Activated CD8-positive, alpha-beta T cell treated with anti-CD3 and anti-CD28 coated beads for 36 hours (primary cell): ENCODE measurements at regions of chr5 and their contacts with region 1.

Region 1: GRCh38 chr5:39376293-39376714 is 12.0 kb upstream of the C9 start:
- DNase-seq: peak; percentile 64
- ATAC-seq: peak; percentile 72
- H3K4me3 Mint-ChIP-seq: no peak overlapping the region
- H3K27ac Mint-ChIP-seq: no peak overlapping the region
- H3K4me1 Mint-ChIP-seq: no peaks in the 10 kb centered on the region
- H3K27me3 Mint-ChIP-seq: peaks cover 3% of the 10 kb centered on the region
- CTCF ChIP-seq: peak; percentile 74

Region 2: GRCh38 chr5:39352951-39353350 is 23.4 kb before region 1 on chr5:
- CTCF ChIA-PET with region 1: interaction called, 14 read pairs
- POLR2A ChIA-PET with region 1: no interaction called
- intact Hi-C with region 1: no loop called
- DNase-seq: no peak
- ATAC-seq: no peak
- H3K4me3 Mint-ChIP-seq: no peak overlapping the region
- H3K27ac Mint-ChIP-seq: no peak overlapping the region
- H3K4me1 Mint-ChIP-seq: peaks cover 3% of the 10 kb centered on the region
- H3K27me3 Mint-ChIP-seq: no peaks in the 10 kb centered on the region
- CTCF ChIP-seq: no peak

Region 3: DNA sequence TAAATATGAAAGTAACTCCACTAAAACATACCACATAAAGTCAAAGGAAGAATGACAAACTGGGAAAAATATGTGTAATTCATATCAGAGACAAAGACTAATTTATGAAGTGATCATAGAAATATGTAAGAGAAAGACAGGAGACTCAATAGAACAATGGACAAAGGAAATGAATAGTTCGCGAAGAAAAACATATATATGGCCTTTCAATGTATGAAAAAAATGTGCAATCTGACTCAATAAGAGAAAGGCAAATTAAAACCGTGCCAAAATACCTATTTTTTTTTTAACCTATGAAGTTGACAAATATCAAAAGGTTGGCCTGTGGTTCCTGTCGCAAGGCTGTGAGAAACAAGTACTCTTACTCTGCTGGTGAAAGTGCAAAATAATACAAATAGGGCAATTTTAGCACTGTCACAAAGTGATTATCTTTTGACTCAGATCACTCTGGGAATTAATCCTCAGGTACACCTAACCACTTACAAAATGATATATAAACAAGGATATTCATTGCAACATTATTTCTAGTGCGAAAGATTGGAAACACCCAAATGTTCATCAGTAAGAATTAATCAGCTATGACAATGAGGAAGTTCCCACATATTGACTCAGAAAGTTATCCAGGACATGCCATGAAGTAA is 15.7 kb before region 1 on chr5:
- CTCF ChIA-PET with region 1: interaction called, 13 read pairs
- POLR2A ChIA-PET with region 1: no interaction called
- intact Hi-C with region 1: no loop called
- DNase-seq: no peak
- ATAC-seq: no peak
- H3K4me3 Mint-ChIP-seq: no peak overlapping the region
- H3K27ac Mint-ChIP-seq: no peak overlapping the region
- H3K4me1 Mint-ChIP-seq: no peaks in the 10 kb centered on the region
- H3K27me3 Mint-ChIP-seq: no peaks in the 10 kb centered on the region
- CTCF ChIP-seq: no peak

Region 4: DNA sequence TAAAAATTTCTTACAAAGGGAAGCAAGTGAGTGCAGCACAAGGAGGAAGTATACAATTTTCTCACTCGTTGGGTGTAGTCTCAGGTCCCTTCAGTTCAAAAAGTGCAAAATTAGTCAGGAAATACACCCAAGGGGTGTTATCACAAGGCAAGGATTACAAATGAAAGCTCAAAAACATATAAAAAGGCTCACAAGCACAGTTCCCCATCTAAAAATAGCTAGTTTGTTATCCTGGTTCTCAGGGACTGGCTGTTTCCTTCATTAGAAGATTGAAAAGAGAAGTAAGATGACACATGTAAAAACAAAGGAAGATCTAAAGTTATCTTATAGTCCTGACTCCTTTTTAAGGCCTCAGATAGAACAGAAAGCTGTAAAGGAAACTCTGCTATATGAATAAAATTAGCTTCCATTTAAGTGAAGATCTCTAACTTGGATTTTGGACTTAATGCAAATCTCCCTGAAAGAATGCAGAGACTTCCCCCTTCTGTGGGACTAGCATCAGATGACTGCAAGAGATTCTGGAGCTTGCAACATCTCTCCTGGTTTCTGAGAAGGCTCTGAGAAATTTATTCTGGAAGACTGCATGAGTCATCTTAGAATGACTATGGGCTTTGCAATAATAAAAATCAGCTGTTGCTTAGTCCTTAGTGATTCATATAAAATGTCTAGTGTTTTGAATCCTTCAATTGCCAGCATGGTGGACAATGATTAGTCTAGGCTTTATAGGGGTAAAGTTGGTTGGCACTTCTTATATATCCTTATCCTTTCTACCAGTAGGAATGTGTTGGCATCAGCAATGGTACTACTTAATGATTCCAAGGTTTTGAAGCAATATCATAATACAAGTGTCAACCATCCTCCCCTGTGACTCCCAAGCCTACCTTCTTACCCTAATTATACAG is 23.1 kb after region 1 on chr5:
- CTCF ChIA-PET with region 1: interaction called, 16 read pairs
- POLR2A ChIA-PET with region 1: no interaction called
- intact Hi-C with region 1: no loop called
- DNase-seq: no peak
- ATAC-seq: no peak
- H3K4me3 Mint-ChIP-seq: no peak overlapping the region
- H3K27ac Mint-ChIP-seq: no peak overlapping the region
- H3K4me1 Mint-ChIP-seq: peaks cover 5% of the 10 kb centered on the region
- H3K27me3 Mint-ChIP-seq: no peaks in the 10 kb centered on the region
- CTCF ChIP-seq: no peak

Region 5: GRCh38 chr5:39475881-39476842 is 99.9 kb after region 1 on chr5:
- CTCF ChIA-PET with region 1: interaction called, 15 read pairs
- POLR2A ChIA-PET with region 1: no interaction called
- intact Hi-C with region 1: no loop called
- DNase-seq: no peak
- ATAC-seq: no peak
- H3K4me3 Mint-ChIP-seq: no peak overlapping the region
- H3K27ac Mint-ChIP-seq: no peak overlapping the region
- H3K4me1 Mint-ChIP-seq: no peaks in the 10 kb centered on the region
- H3K27me3 Mint-ChIP-seq: peaks cover 6% of the 10 kb centered on the region
- CTCF ChIP-seq: no peak

Region 6: DNA sequence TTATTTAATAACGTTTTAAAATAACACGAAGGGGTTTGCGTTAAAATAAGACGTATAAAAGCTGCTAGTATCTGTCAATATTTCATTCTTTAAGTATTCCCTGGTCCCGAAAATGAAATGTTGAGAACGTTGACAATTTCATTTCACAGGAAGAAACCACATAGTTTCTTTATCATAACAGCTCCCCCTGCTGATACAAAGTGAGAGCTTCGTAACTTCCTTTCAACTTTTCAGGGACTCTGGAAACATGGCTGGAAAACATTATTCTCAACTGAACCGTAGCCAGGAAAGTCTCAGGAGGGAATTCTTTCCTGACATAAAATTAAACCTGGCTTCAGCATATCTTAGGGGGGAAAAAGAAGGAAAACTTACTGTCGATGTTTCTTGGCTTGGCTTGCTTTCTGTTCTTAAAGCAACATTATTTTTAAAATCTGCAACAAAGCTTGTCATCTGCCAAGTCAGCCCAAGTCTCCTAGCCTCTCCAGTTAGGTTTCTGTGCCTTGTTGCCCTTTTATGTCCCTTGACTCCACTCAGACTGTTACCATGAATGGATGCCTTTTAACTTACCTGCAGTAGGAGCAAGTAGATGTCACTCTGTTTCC is 171.3 kb after region 1 on chr5:
- CTCF ChIA-PET with region 1: interaction called, 71 read pairs
- POLR2A ChIA-PET with region 1: no interaction called
- intact Hi-C with region 1: loop called (anchors 2 kb)
- DNase-seq: peak; percentile 6
- ATAC-seq: no peak
- H3K4me3 Mint-ChIP-seq: no peak overlapping the region
- H3K27ac Mint-ChIP-seq: no peak overlapping the region
- H3K4me1 Mint-ChIP-seq: no peaks in the 10 kb centered on the region
- H3K27me3 Mint-ChIP-seq: peaks cover 3% of the 10 kb centered on the region
- CTCF ChIP-seq: peak; percentile 70

Region 7: DNA sequence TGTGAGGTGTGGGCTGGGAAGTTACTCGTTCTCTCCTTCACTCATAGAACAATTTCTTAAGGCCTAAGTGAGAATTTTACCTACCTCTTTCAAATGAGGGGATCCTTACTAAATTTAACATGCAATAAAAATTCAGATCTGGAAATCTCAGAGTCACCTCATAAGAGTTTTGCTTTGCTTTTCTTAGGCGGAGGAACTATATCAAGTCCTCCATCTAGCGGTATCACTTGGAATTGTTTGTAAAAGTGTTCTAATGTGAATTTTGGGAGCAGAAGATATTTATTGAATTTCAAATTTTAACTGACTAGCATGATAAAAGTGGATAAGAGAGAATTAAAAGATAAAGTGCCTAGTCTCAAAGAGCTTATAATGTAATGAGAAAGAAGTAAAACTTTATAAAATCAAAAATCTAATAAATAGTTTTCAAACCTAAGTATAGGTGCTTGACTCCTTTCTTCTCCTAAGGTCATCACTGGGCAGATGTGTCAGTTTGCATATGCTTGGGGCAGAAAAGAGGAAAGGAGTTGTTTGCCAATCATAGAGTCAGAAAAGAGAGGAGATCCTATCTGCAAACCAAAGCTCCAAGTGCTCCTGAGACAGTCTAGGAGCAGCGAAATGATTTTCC is 194.2 kb after region 1 on chr5:
- CTCF ChIA-PET with region 1: interaction called, 24 read pairs
- POLR2A ChIA-PET with region 1: no interaction called
- intact Hi-C with region 1: no loop called
- DNase-seq: no peak
- ATAC-seq: no peak
- H3K4me3 Mint-ChIP-seq: no peak overlapping the region
- H3K27ac Mint-ChIP-seq: no peak overlapping the region
- H3K4me1 Mint-ChIP-seq: peaks cover 2% of the 10 kb centered on the region
- H3K27me3 Mint-ChIP-seq: peaks cover 5% of the 10 kb centered on the region
- CTCF ChIP-seq: peak; percentile 57